GM12878 (cell line): ENCODE measurements at regions of chr14 and their contacts with region 1.

Region 1: DNA sequence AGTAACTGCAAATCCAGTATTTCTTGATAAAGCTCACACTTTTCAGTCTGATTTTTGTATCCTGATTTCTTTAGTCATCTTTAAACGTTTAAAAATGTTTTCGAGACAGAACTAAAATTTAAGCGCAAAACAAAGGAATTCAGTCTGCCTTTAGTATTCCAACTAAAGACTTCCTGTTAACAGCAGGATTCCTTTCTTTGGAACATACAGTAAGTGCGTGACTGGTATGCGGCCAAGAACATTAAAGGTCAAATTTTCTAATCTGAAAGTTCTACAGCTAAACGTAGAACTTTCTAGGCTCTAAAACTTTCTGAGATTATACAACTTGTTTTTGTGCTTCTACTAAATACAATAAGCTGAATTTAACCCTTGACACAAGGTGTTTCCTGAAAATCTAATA is 9.9 kb downstream of the SAV1 start:
- DNase-seq: no peak
- ATAC-seq: no peak
- H3K4me3 ChIP-seq: no peak overlapping the region
- H3K27ac ChIP-seq: no peak overlapping the region
- H3K4me1 ChIP-seq: no peaks in the 10 kb centered on the region
- H3K27me3 ChIP-seq: no peaks in the 10 kb centered on the region
- CTCF ChIP-seq: no peak
- EP300 ChIP-seq: no peak
- POLR2A ChIP-seq: no peak
- RAD21 ChIP-seq: no peak

Region 2: GRCh38 chr14:50647282-50647681 is 10.9 kb before region 1 on chr14:
- CTCF ChIA-PET with region 1: no interaction called
- POLR2A ChIA-PET with region 1: interaction called, 4 read pairs
- RAD21 ChIA-PET with region 1: interaction called, 5 read pairs
- SMC1A ChIA-PET with region 1: interaction called, 10 read pairs
- in situ Hi-C with region 1: no loop called
- intact Hi-C with region 1: no loop called
- DNase-seq: peak; percentile 45
- ATAC-seq: peak; percentile 94
- H3K4me3 ChIP-seq: peak overlapping the region; percentile 10
- H3K27ac ChIP-seq: peak overlapping the region; percentile 45
- H3K4me1 ChIP-seq: peaks cover 38% of the 10 kb centered on the region
- H3K27me3 ChIP-seq: no peaks in the 10 kb centered on the region
- CTCF ChIP-seq: no peak
- EP300 ChIP-seq: no peak
- POLR2A ChIP-seq: 0 out of 2 replicates have a peak, but pooled peaks have one; percentile 29
- RAD21 ChIP-seq: no peak

Region 3: DNA sequence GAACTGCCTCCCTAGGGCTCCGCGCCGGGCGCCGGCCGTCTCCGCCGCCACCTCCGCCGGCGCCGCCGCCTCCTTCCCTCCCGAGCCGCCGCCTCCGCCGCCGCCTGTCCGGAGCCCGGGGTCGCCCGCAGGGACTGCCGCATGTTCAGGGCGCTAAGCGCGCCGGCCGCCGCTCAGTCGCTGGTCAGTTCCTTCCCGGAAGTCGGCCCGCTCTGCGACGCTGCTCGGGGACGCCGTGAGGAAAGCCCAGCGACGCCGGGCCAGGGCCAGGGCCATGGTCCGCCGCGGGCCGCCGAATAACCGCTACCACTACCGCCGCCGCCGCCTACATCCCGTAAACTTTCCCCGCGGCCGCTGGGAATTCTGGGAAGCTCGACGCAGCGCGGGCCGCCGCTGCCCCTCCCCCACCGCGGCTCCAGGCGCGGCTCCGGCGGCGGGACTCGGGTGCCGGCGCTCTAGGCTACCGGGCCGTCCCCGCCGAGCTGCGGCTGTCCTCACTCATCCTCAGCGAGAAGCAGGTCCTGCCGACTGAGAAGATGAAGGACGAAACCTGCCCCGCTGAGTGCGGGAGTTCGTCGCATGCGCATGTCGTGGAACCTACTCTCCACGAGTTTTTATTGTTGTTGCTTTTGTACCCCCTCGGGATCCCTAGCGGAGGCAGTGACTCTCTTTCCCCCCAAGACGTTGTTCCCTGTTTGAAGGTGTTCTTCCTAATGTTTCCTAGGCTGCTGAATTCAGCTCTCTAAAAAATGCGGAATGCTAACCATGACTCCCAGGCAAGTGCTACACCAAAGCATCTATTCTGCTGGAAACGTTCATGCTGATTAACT is 10.0 kb after region 1 on chr14 and contains the start of gene SAV1:
- CTCF ChIA-PET with region 1: interaction called, 8 read pairs
- POLR2A ChIA-PET with region 1: interaction called, 4 read pairs
- RAD21 ChIA-PET with region 1: interaction called, 4 read pairs
- SMC1A ChIA-PET with region 1: interaction called, 11 read pairs
- in situ Hi-C with region 1: no loop called
- intact Hi-C with region 1: no loop called
- DNase-seq: no peak
- ATAC-seq: peak; percentile 78
- H3K4me3 ChIP-seq: peak within 1 kb of the TSS; percentile 90
- H3K27ac ChIP-seq: peak within 1 kb of the TSS; percentile 30
- H3K4me1 ChIP-seq: no peaks in the 10 kb centered on the region
- H3K27me3 ChIP-seq: no peaks in the 10 kb centered on the region
- CTCF ChIP-seq: no peak
- EP300 ChIP-seq: no peak
- POLR2A ChIP-seq: peak; percentile 84
- RAD21 ChIP-seq: peak; percentile 11; the same call in 1 of the 2 replicates
- polyA plus RNA-seq, gene SAV1: 10.1 to 15.1 TPM

Region 4: DNA sequence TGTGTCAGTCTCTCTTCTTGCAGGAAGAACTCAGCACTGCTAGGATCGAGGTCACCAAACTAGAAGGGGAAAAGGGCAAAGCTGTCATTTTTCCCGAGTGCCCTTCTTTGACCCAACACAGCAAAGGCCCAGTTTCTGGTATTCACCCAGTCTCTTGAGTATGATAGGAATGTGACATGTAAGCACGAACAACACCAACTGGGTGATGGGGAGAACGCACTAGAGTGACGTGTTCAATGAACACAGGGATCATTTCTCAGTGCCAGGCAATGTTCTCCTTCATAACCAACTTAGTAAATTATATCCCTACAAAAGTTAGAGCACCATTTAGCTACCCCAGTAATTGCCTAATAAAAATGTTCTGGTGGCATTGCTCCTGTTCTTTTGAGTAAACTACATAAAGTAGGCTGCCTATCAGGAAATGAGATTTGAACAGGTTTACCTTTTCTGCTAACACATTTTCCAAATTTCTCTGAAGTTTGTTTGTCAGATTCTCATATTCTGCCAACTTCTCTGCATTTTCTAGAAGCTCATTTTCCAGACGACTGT is 108.2 kb after region 1 on chr14:
- CTCF ChIA-PET with region 1: no interaction called
- POLR2A ChIA-PET with region 1: no interaction called
- RAD21 ChIA-PET with region 1: no interaction called
- SMC1A ChIA-PET with region 1: no interaction called
- in situ Hi-C with region 1: no loop called
- intact Hi-C with region 1: no loop called
- DNase-seq: no peak
- ATAC-seq: no peak
- H3K4me3 ChIP-seq: no peak overlapping the region
- H3K27ac ChIP-seq: no peak overlapping the region
- H3K4me1 ChIP-seq: peaks cover 12% of the 10 kb centered on the region; the same call in 1 of the 2 replicates
- H3K27me3 ChIP-seq: no peaks in the 10 kb centered on the region
- CTCF ChIP-seq: no peak
- EP300 ChIP-seq: no peak
- POLR2A ChIP-seq: no peak
- RAD21 ChIP-seq: no peak